Activated naive CD4-positive, alpha-beta T cell treated with anti-CD3 and anti-CD28 coated beads for 36 hours (primary cell): ENCODE measurements at regions of chr2 and their contacts with region 1.

Region 1: DNA sequence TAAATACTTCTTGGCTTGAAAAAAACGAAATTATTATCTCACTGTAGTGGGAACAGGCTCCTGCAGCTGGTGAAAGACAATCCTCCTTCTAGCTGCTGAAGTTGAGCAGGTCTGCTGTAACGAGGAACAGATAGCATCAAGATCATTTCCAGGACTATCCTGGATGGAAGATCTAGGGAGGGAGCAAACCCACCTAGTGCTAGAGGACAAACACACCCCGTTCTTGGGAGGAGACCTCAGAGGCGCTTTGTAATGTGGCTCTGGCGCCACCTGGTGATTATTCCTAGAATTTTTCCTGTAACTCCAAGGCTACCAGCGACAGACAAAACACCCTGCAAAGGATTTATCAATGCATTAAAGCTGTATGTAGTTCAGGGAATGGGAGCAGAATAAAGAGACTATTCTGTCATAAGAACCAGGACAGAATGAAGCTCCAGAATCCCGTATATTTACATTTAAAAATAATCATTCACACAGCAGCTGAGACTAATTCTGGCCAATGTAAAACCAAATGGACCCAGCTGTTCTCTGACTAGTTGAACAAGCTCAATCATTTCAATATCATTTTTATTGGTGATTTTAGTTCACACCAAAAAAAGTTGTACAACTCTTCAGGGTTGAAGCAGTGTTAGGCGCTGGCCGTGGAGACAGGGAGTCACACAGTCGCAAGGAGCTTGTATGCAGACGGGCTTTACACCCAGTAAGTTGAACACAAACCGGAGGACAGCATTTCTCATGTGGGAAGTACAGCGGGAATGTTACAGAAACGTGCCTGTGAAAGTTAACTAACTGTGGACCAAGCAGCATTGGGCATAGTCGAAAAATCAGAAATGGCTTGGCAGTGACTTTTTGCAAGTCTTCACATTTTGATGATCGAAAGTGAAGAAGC is 290.3 kb downstream of the TRIB2 start:
- DNase-seq: peak; percentile 72
- H3K4me3 Mint-ChIP-seq: no peak overlapping the region
- H3K27ac Mint-ChIP-seq: no peak overlapping the region
- H3K4me1 Mint-ChIP-seq: no peaks in the 10 kb centered on the region
- H3K27me3 Mint-ChIP-seq: peaks cover 9% of the 10 kb centered on the region

Region 2: DNA sequence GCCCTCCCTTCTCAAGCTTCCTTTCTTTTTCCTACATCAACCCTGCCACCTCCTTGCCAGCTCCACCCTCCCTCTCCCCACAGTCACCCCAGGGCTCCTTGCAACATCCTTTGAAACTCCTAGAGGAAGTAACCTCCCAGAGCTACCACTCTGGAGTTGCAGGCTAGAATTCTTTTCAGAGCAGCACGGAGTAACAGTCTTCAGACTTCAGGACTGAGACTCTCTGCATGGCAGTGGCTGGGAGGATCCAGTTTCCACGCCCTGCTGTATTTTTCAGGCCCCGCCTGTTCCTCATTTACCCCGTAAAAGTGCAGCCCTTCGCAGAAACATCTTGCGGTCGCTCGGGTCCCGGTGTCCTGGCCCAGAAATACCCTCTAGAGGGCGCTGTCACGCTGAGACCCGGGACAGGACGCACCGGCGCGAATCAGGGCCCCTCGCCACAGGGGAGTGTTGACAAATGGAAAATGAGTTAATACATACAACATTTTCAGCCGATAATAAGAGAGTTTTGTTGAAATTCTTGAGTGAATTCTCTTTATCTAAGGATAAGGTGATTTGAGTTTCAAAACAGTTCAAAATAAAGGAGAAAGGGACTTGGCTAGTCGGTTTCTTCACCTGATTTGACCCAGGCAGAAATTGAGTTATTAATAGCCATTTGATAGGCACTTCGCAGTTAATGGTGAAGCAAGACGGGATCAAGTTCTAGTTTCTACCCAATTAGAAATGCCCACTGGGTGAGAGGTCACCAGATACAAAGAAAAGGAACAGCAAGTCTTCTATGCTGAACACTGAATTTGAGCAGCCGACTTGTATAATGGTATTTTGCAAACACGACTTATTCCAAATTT is 1318.6 kb before region 1 on chr2:
- CTCF ChIA-PET with region 1: no interaction called
- intact Hi-C with region 1: loop called (anchors 10 kb)
- DNase-seq: peak; percentile 89
- H3K4me3 Mint-ChIP-seq: peak overlapping the region; percentile 32
- H3K27ac Mint-ChIP-seq: no peak overlapping the region
- H3K4me1 Mint-ChIP-seq: peaks cover 10% of the 10 kb centered on the region
- H3K27me3 Mint-ChIP-seq: peaks cover 5% of the 10 kb centered on the region

Region 3: DNA sequence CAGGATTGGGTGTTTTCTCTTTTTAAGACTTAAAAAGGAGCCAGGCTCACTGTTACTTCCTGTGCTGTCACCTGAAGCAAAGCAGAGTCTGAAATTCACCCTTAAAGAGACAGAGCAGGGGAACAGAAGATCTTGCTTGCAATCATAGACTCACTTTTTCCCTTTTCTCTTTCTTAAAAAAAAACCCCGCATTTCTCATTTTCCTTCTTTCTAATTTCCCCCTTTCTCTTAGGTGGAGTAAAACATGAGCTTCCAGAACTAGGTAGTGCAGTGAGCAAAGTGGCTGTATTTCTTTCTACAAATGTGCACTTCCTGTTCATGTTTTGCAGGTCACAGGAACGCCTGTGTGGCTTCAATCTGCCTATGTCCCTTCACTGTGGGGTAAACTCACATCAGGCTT is 879.4 kb before region 1 on chr2:
- CTCF ChIA-PET with region 1: interaction called, 4 read pairs
- intact Hi-C with region 1: loop called (anchors 5 kb)
- DNase-seq: peak; percentile 37
- H3K4me3 Mint-ChIP-seq: no peak overlapping the region
- H3K27ac Mint-ChIP-seq: peak overlapping the region; percentile 74
- H3K4me1 Mint-ChIP-seq: peaks cover 2% of the 10 kb centered on the region
- H3K27me3 Mint-ChIP-seq: no peaks in the 10 kb centered on the region

Region 4: DNA sequence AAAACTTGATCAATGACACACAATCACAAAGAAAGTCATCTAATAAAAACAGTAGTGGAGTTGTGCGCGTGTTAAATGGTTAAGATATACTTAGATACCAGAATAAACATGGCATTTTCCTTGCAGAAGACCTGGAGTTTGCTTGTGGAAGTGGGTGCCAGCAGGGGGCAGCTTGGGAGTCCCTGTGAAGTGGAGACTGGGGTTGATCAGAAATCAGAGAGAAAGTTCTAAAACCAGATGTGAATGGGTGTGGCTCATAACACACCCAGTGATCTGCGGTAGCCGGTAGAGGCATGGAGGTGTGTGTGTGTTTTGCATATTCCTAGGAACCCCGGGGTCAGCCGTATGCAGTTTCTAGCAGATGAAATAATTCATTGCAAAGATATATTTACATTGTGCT is 590.5 kb before region 1 on chr2:
- CTCF ChIA-PET with region 1: interaction called, 9 read pairs
- intact Hi-C with region 1: loop called (anchors 2 kb)
- DNase-seq: peak; percentile 72
- H3K4me3 Mint-ChIP-seq: no peak overlapping the region
- H3K27ac Mint-ChIP-seq: no peak overlapping the region
- H3K4me1 Mint-ChIP-seq: peaks cover 34% of the 10 kb centered on the region
- H3K27me3 Mint-ChIP-seq: no peaks in the 10 kb centered on the region

Region 5: DNA sequence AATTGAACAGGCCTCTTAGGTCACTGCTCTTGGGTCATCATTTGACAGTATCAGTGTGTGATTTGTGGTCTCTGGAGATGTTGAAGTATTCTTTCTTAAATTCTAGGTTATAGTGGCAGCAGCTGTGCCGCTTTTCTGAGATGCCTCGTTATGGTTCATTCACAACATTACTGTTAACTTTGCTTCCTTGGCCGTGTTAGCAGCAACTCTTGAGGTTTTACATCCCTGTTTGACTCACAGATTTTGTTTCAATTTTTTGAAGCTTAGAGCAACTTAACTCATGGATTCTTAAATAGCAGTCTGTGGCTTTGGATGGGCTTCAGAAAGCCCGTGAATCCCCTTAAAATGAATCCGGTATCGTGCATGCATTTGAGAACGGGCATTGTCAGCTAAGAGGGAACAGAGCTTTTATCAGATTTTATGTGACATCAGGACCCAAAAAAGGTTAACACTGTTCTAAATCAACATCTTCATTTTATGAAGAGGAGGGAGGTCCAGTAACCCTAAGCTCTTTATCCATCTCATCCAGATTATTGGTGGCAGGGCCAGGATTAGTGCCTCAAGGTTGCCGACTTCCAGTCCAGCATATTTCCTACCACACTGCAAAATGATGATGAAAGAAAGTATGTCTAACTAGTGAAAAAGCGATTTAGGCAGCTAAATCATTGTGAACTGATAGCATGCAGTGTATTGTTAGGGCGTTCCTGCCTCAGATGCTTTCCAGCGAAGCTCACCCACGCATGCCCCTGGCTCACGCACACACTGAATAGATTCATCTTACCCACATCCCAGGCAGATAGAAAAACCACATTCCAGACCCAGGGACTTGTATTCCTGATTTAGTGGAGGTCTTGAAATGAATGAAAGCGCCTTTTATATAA is 285.3 kb before region 1 on chr2:
- CTCF ChIA-PET with region 1: interaction called, 17 read pairs
- intact Hi-C with region 1: loop called (anchors 1 kb)
- DNase-seq: peak; percentile 48
- H3K4me3 Mint-ChIP-seq: peak overlapping the region; percentile 54
- H3K27ac Mint-ChIP-seq: peak overlapping the region; percentile 46
- H3K4me1 Mint-ChIP-seq: peaks cover 77% of the 10 kb centered on the region
- H3K27me3 Mint-ChIP-seq: peaks cover 1% of the 10 kb centered on the region

Region 6: DNA sequence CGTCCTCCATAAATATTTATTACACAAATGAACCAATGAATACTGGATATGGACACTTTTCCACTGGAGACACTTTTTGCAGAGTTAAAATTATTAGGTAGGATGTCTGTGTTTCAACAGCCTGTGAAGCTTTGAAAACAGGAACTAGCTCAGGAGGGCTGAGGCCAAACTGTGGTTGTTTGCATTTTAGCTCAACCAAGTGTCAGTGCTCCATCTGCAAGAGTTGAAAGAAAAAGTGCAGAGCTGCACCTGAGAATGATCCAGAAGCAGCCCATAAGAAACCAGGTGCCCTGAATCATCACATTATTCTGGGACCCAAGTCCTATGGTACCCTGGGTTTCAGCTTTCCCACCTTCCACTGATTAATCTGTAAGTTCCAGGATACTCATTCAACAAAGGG is 109.9 kb before region 1 on chr2:
- CTCF ChIA-PET with region 1: no interaction called
- intact Hi-C with region 1: no loop called
- DNase-seq: no peak
- H3K4me3 Mint-ChIP-seq: no peak overlapping the region
- H3K27ac Mint-ChIP-seq: no peak overlapping the region
- H3K4me1 Mint-ChIP-seq: peaks cover 15% of the 10 kb centered on the region
- H3K27me3 Mint-ChIP-seq: no peaks in the 10 kb centered on the region

Region 7: DNA sequence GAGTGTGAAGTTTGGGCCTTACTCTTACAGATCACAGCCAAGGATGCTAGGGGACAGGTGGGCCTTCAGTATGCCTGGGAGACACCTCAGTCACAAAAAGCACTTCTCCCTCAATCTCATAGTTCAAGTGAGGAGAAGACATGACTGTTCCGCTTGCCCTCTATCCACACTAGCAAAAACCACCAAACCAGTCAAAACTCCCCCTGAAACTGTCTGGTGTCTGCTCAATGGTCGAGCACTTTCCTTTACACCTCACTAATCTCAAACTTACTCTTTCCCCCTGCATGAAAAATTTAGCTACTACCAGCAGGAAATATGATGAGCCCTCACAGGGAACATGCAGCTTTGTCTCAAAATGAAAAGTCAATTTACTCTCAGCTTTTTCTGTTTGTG is 58.1 kb before region 1 on chr2:
- CTCF ChIA-PET with region 1: interaction called, 10 read pairs
- intact Hi-C with region 1: no loop called
- DNase-seq: peak; percentile 29
- H3K4me3 Mint-ChIP-seq: no peak overlapping the region
- H3K27ac Mint-ChIP-seq: no peak overlapping the region
- H3K4me1 Mint-ChIP-seq: peaks cover 13% of the 10 kb centered on the region
- H3K27me3 Mint-ChIP-seq: peaks cover 18% of the 10 kb centered on the region

Region 8: GRCh38 chr2:12990523-12990922 is 16.6 kb before region 1 on chr2:
- CTCF ChIA-PET with region 1: interaction called, 13 read pairs
- intact Hi-C with region 1: no loop called
- DNase-seq: no peak
- H3K4me3 Mint-ChIP-seq: no peak overlapping the region
- H3K27ac Mint-ChIP-seq: no peak overlapping the region
- H3K4me1 Mint-ChIP-seq: peaks cover 5% of the 10 kb centered on the region
- H3K27me3 Mint-ChIP-seq: peaks cover 4% of the 10 kb centered on the region